CD4-positive, alpha-beta memory T cell (primary cell): ENCODE measurements at regions of chr1 and their contacts with region 1.

Region 1: GRCh38 chr1:178310685-178311105 is 186.1 kb downstream of the CLEC20A start:
- DNase-seq: peak in 4 of 5 donors; percentile 13 to 29 (median 20)
- H3K4me3 ChIP-seq: no peak overlapping the region
- H3K4me3 Mint-ChIP-seq: no peak overlapping the region
- H3K27ac ChIP-seq: no peak overlapping the region
- H3K27ac Mint-ChIP-seq: no peak overlapping the region
- H3K4me1 ChIP-seq: no peaks in the 10 kb centered on the region
- H3K4me1 Mint-ChIP-seq: no peaks in the 10 kb centered on the region
- H3K27me3 ChIP-seq: no peaks in the 10 kb centered on the region
- H3K27me3 Mint-ChIP-seq: peaks cover 0 to 5% of the 10 kb centered on the region in 2 donors

Region 2: GRCh38 chr1:178300352-178300699 is 10.4 kb before region 1 on chr1:
- CTCF ChIA-PET with region 1: interaction called, 15 read pairs
- POLR2A ChIA-PET with region 1: no interaction called
- intact Hi-C with region 1: no loop called
- DNase-seq: no peak
- H3K4me3 ChIP-seq: no peak overlapping the region
- H3K4me3 Mint-ChIP-seq: no peak overlapping the region
- H3K27ac ChIP-seq: no peak overlapping the region
- H3K27ac Mint-ChIP-seq: no peak overlapping the region
- H3K4me1 ChIP-seq: no peaks in the 10 kb centered on the region
- H3K4me1 Mint-ChIP-seq: no peaks in the 10 kb centered on the region
- H3K27me3 ChIP-seq: no peaks in the 10 kb centered on the region
- H3K27me3 Mint-ChIP-seq: peaks cover 3 to 6% of the 10 kb centered on the region in 2 donors

Region 3: GRCh38 chr1:178501705-178502329 is 191.1 kb after region 1 on chr1:
- CTCF ChIA-PET with region 1: no interaction called
- POLR2A ChIA-PET with region 1: no interaction called
- intact Hi-C with region 1: loop called (anchors 2 kb)
- DNase-seq: peak in 3 of 5 donors; percentile 3 to 13 (median 9)
- H3K4me3 ChIP-seq: no peak overlapping the region
- H3K4me3 Mint-ChIP-seq: no peak overlapping the region
- H3K27ac ChIP-seq: no peak overlapping the region
- H3K27ac Mint-ChIP-seq: no peak overlapping the region
- H3K4me1 ChIP-seq: no peaks in the 10 kb centered on the region
- H3K4me1 Mint-ChIP-seq: no peaks in the 10 kb centered on the region
- H3K27me3 ChIP-seq: no peaks in the 10 kb centered on the region
- H3K27me3 Mint-ChIP-seq: peaks cover 0 to 5% of the 10 kb centered on the region in 2 donors